Sigmoid colon (tissue), 7 donors: ENCODE measurements at regions of chr2 and their contacts with region 1.

Region 1: GRCh38 chr2:50401772-50402653 is 629.9 kb downstream of the NRXN1 start:
- DNase-seq: peak; percentile 50
- H3K4me3 ChIP-seq: no peak overlapping the region
- H3K27ac ChIP-seq: no peak overlapping the region
- H3K4me1 ChIP-seq: no peaks in the 10 kb centered on the region
- H3K27me3 ChIP-seq: no peaks in the 10 kb centered on the region
- CTCF ChIP-seq: peak; percentile 58 to 83 (median 76)
- EP300 ChIP-seq: no peak
- POLR2A ChIP-seq: no peak

Region 2: DNA sequence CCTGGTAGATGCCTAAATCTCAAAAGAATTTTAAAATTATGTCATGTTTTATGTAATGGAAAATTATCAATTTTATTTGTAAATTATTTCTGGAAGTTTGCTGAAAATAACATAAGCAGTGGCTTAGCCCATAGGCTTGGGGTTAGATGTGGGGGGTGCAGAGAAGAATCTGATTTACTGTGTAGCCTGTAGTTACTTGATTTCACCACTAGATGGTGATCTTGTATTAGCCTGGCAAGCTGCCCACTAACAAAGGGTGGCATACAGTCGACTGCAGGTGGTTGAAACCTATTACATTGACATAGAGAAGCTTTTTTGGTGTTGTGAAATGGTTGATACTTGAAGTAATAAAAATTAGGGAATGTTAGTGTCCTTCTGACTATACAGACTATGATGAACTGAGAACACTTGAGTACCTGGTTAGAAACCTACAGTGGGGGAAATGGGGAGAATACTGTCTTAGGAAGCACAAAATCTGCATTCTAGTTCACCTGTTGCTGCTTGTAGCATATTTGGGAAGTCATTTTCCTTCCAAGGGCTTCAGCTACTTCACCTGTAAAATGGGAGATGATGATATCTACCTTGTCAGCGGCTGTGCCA is 1455.5 kb before region 1 on chr2:
- intact Hi-C with region 1: loop called (anchors 5 kb)
- DNase-seq: peak; percentile 69
- H3K4me3 ChIP-seq: no peak overlapping the region
- H3K27ac ChIP-seq: no peak overlapping the region
- H3K4me1 ChIP-seq: peaks cover 0 to 24% (median 10%) of the 10 kb centered on the region in 4 donors
- H3K27me3 ChIP-seq: peaks cover 0 to 25% (median 0%) of the 10 kb centered on the region in 3 donors
- CTCF ChIP-seq: peak; percentile 40 to 90 (median 86)
- EP300 ChIP-seq: no peak
- POLR2A ChIP-seq: no peak

Region 3: DNA sequence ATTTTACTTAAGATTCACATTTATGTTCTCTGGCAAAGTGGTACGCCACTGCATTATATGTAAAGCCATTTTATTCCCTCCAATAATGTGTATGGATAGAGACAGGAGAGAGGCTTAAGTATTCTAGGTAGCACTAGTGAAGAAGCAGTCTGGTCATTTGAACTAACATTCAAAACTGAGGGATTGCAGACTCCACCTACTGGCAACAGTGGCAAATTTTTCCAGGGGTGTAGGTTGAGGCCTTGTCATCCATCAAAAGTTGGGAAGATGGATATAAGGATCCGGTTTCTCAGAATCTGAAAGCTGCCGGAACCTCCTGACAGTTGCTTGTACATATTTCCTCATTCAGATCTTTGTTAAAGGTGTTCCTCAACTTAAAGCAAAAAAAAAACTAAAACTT is 782.2 kb before region 1 on chr2:
- intact Hi-C with region 1: loop called (anchors 10 kb)
- DNase-seq: no peak
- H3K4me3 ChIP-seq: no peak overlapping the region
- H3K27ac ChIP-seq: no peak overlapping the region
- H3K4me1 ChIP-seq: no peaks in the 10 kb centered on the region
- H3K27me3 ChIP-seq: no peaks in the 10 kb centered on the region
- CTCF ChIP-seq: no peak
- EP300 ChIP-seq: no peak
- POLR2A ChIP-seq: no peak

Region 4: GRCh38 chr2:49687918-49688317 is 714.1 kb before region 1 on chr2:
- intact Hi-C with region 1: loop called (anchors 10 kb)
- DNase-seq: no peak
- H3K4me3 ChIP-seq: no peak overlapping the region
- H3K27ac ChIP-seq: no peak overlapping the region
- H3K4me1 ChIP-seq: no peaks in the 10 kb centered on the region
- H3K27me3 ChIP-seq: no peaks in the 10 kb centered on the region
- CTCF ChIP-seq: peak in 1 of 4 experiments; percentile 36
- EP300 ChIP-seq: no peak
- POLR2A ChIP-seq: no peak

Region 5: GRCh38 chr2:49770919-49771318 is 631.1 kb before region 1 on chr2:
- intact Hi-C with region 1: loop called (anchors 10 kb)
- DNase-seq: no peak
- H3K4me3 ChIP-seq: no peak overlapping the region
- H3K27ac ChIP-seq: no peak overlapping the region
- H3K4me1 ChIP-seq: no peaks in the 10 kb centered on the region
- H3K27me3 ChIP-seq: no peaks in the 10 kb centered on the region
- CTCF ChIP-seq: peak in 1 of 4 experiments; percentile 24
- EP300 ChIP-seq: no peak
- POLR2A ChIP-seq: no peak

Region 6: DNA sequence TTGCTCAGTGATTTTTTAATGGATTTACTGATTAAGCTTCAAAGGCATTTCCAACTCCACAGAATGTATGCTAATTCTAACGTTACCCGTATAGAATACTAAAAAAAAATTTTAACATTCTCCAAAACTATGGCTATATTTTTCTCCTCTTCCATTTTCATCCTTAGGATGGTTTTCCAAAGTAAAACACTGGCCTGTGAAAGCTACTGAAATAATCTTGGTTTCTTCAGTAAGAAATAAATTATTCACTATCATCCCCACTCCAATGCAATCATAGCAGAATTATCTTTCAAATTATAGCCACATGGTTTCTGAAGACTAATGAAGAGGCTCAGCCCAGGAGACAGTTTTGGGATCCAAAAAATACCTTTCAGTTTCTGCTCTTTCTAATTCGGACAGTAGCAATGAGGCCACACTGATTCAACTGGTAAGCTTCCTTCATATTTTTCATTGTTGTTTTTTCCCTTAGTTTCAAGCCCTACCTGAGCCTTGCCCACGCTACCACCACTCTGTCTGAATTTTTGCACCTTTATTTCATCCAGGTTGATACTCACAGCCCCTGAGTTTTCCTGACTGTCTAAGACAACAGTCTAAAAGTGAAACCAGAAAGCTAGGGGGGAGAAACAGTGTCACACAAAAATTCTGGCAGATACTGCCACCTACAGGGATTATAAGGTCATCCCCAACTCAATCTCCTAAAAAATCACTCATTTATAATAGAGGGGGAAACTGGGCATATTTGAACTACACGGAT is 258.0 kb before region 1 on chr2:
- intact Hi-C with region 1: loop called (anchors 10 kb)
- DNase-seq: no peak
- H3K4me3 ChIP-seq: peak overlapping the region in 3 of 4 donors; percentile 35 to 42 (median 40)
- H3K27ac ChIP-seq: peak overlapping the region in 2 of 4 donors; percentile 10 to 30
- H3K4me1 ChIP-seq: peaks cover 0 to 8% (median 0%) of the 10 kb centered on the region in 4 donors
- H3K27me3 ChIP-seq: no peaks in the 10 kb centered on the region
- CTCF ChIP-seq: peak; percentile 25 to 55 (median 39)
- EP300 ChIP-seq: no peak
- POLR2A ChIP-seq: no peak